Ascending aorta (tissue), 2 donors: ENCODE measurements at regions of chr12 and their contacts with region 1.

Region 1: DNA sequence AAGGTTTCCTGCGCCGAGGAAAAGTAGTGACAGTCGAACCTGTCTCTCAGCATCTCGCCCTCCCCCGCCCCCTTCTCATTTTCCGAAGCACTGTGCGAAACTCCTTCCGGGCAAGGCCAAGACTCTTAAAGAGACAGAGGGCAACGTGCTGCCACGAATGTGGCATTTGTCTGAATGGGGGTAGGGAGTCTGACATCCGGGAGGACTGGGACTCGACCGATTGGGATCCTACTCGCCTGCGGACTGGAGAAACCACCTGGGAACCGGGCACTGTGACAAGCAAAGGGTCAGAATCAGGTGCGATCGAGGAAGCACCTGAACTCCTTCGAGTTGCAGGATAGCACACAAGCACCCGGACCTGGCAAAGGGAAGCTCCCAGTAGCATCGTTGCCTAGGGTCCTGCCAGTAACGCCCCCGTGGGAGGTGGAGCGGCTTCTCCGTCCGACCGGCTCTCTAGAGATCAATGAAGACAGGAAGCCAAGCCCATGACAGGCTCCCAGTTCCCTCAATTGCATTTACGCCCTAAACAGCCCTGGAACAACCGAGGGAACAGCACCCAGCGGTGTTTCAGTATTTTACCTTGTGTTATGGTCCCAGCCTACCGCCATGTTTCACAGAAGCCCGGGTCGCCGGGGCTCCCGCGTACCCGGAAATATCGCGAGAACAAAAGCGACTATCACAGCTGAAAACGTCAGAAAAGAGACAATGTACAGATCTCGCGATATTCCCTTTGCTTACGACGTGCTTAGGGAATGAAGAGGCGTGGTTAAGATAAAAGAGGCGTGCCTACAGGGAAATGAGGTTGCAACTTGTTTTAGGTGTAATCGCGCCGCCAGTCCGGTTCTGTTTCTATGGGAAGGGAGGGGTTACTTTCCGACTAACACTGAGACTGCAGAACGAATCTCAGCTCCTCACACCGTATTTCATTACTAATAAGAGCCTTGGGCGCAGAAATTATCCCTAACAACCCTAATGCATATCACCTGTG is at the start of gene ERGIC2:
- DNase-seq: peak; percentile 83 to 97
- H3K4me3 ChIP-seq: peak within 1 kb of the TSS; percentile 76 to 88
- H3K27ac ChIP-seq: peak within 1 kb of the TSS; percentile 75 to 86
- H3K4me1 ChIP-seq: peaks cover 0 to 9% of the 10 kb centered on the region in 2 donors
- H3K27me3 ChIP-seq: no peaks in the 10 kb centered on the region
- CTCF ChIP-seq: no peak
- total RNA-seq, gene ERGIC2: 12.5 TPM

Region 2: DNA sequence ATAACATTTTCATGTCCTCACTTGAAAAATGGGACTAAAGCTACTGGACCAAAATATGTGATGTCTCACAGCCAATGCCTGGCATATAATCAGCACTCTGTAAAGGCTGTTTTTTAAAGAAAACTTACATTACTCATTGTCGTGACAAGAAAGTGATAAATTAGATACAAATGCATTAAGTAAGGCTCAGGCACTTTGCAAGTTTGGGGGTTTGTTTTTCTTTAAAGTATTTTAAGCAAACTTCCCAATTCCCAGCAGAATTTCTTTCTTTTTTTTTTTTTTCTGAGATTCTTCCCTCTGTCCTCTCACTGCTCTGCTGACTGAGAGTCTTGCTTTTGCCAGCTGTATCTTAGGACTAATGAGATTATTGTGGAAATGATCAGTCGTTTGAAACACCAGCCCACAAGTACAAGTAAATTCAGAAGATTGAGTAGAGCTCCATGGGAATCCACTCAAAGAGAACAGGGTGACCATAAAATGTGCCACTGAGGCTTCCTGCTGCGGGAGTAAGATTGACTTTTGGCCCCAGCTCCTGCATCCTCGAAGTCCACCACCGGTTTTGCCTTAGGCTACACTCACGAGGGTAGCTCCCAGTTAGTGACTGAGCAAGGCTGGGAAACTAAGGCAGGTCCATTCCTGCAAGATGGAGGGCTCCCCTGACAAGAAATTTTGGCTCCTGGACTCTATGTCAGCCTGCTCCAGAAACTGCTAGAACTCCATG is 320.1 kb after region 1 on chr12:
- intact Hi-C with region 1: loop called (anchors 10 kb)
- DNase-seq: no peak
- H3K4me3 ChIP-seq: no peak overlapping the region
- H3K27ac ChIP-seq: no peak overlapping the region
- H3K4me1 ChIP-seq: peaks cover 0 to 6% of the 10 kb centered on the region in 2 donors
- H3K27me3 ChIP-seq: no peaks in the 10 kb centered on the region
- CTCF ChIP-seq: no peak

Region 3: DNA sequence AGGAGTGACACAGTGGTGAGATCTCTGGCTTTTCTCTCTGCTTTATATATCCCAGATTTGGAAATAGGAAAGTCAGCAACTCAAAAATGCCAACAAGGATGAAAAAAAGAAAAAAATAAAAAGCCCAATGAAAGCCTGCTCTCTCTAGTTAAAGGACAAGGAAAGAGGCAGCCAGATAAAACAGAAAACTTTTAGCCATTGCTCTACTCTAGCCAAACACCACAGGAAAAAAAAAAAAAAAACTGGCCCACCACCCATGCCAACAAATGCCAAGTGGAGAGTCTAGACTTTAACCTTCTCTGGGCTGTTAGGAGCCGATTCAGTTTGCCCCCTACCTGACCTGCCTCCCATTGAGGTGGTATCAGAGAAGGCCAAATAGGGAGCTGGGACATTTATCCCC is 625.2 kb after region 1 on chr12:
- intact Hi-C with region 1: loop called (anchors 5 kb)
- DNase-seq: no peak
- H3K4me3 ChIP-seq: peak overlapping the region in 1 of 2 donors; percentile 6
- H3K27ac ChIP-seq: peak overlapping the region; percentile 69 to 72
- H3K4me1 ChIP-seq: peaks cover 5 to 28% of the 10 kb centered on the region in 2 donors
- H3K27me3 ChIP-seq: no peaks in the 10 kb centered on the region
- CTCF ChIP-seq: no peak

Region 4: DNA sequence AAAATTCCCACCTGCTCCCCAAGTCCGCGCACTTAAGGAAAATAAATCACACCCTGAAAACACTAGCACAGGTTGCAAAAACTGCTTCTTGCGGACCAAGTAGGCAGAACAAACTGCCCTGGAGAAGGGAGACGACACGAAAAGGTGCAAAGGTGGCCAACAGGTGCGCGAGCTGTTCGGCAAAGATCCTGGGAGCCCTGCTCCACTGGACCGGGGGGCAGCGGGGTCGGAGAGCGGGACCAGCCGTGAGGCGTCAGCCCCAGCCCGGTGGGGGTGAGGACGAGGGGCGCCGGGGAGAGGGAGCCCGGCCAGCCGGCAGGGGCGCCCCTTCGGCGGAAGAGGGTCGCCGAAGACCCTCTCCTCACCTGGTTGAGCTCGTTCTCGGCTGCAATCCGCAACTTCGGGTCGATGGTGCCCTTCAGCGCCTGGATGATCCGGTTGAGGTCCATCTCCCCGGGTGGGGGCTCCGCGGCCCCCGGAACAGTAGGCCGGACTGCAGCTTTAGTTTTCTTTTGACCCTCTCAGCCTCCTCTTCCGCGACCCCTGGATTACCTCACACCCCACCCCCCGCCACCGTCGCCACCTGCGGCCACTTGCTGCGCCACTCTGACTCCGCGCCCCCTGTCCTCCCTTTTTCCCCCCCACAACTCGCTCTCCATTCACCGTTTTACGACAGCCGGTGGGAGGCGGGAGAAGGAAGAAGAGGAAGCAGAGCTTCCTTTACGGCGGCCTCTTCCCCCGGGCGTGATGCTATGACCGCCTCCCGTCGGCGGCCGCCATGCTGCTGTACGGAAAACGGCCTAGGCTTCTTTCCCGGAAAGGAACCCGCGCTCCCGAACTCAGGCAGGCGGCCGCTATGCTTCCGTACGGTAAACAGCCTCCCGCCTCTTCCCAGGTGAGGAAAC is 1314.6 kb after region 1 on chr12 and contains the start of gene IPO8:
- intact Hi-C with region 1: loop called (anchors 1 kb)
- DNase-seq: peak; percentile 77 to 95
- H3K4me3 ChIP-seq: peak within 1 kb of the TSS; percentile 81 to 95
- H3K27ac ChIP-seq: peak within 1 kb of the TSS; percentile 62 to 68
- H3K4me1 ChIP-seq: peaks cover 10 to 11% of the 10 kb centered on the region in 2 donors
- H3K27me3 ChIP-seq: no peaks in the 10 kb centered on the region
- CTCF ChIP-seq: peak in 1 of 3 experiments; percentile 20
- total RNA-seq, gene IPO8: 79.7 TPM

Region 5: DNA sequence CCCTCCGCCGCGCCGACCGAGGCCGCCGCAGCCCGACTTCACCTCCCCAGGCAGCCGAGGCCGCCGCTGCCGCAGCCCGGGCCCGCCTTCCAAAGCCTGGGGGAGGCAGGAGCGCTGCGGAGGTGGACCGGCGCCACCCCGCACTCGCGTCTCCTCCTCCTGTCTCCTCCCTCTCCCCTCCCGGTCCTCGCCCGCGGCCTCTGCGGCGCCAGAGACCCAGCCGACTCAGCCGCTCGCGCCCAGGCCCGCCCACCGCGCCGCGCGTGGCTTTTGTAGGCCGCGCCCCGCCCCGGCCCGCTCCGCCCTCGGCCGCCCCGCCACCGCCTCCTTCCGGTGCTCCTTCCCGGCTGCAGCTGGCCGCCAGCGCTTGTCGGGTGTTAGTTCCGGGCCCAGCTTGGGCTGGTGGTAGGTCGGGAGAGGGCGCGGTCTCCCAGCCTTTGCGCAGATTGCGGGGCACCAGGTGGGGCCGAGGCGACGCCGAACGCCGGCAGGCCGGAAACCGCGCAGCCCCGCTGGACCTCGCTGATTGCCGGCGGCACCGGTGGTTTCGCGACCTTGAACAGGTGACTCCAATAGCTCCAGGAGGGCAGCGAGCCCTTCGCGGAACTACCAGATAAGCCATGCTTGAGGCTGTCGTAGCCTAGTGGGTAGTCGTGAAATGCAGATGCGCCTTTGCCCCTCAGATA is 1374.0 kb after region 1 on chr12 and contains the start of gene CAPRIN2:
- intact Hi-C with region 1: loop called (anchors 1 kb)
- DNase-seq: peak; percentile 82 to 98
- H3K4me3 ChIP-seq: peak within 1 kb of the TSS; percentile 87 to 100
- H3K27ac ChIP-seq: peak within 1 kb of the TSS; percentile 83 to 84
- H3K4me1 ChIP-seq: peaks cover 0 to 6% of the 10 kb centered on the region in 2 donors
- H3K27me3 ChIP-seq: no peaks in the 10 kb centered on the region
- CTCF ChIP-seq: peak; percentile 30 to 49 (median 44)
- total RNA-seq, gene CAPRIN2: 20.6 TPM

Region 6: GRCh38 chr12:31325877-31326631 is 1945.2 kb after region 1 on chr12 and contains the start of gene SINHCAF:
- intact Hi-C with region 1: loop called (anchors 2 kb)
- DNase-seq: peak; percentile 99 to 100
- H3K4me3 ChIP-seq: peak within 1 kb of the TSS; percentile 86 to 91
- H3K27ac ChIP-seq: peak within 1 kb of the TSS; percentile 81 to 84
- H3K4me1 ChIP-seq: no peaks in the 10 kb centered on the region
- H3K27me3 ChIP-seq: no peaks in the 10 kb centered on the region
- CTCF ChIP-seq: no peak
- total RNA-seq, gene SINHCAF: 10.9 TPM